ENCODE measurements at regions of chr12 and their contacts with region 1.

Region 1: DNA sequence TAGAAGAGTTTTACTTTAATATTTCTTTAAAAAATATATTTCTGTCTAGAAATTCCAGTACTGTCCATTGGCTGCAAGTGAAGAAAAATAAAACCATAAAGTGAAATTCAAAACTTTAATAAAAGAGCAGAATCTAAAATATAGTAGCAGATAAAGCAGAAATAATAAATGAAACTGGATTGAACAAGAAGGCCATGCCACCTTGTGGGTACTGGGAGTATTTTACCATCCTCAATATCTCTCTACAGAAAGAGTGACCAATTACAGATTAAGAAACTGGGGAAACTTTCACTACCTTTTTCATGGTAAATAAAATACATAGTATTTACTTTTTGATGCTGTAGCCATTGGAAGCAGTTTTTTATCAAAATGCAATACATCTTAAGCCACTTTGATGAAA is 220.5 kb downstream of the BCAT1 start:
- DNase-seq: no peak
- ATAC-seq: no peak
- H3K4me3 Mint-ChIP-seq: no peak overlapping the region
- H3K27ac Mint-ChIP-seq: peak overlapping the region; percentile 37
- H3K4me1 Mint-ChIP-seq: peaks cover 53% of the 10 kb centered on the region
- H3K27me3 Mint-ChIP-seq: no peaks in the 10 kb centered on the region

Region 2: GRCh38 chr12:24425601-24425970 is 302.8 kb before region 1 on chr12:
- CTCF ChIA-PET with region 1: no interaction called
- POLR2A ChIA-PET with region 1: no interaction called
- intact Hi-C with region 1: loop called (anchors 5 to 10 kb)
- DNase-seq: peak; percentile 34
- ATAC-seq: peak; percentile 88
- H3K4me3 Mint-ChIP-seq: no peak overlapping the region
- H3K27ac Mint-ChIP-seq: peak overlapping the region; percentile 80
- H3K4me1 Mint-ChIP-seq: peaks cover 19% of the 10 kb centered on the region
- H3K27me3 Mint-ChIP-seq: peaks cover 5% of the 10 kb centered on the region

Region 3: DNA sequence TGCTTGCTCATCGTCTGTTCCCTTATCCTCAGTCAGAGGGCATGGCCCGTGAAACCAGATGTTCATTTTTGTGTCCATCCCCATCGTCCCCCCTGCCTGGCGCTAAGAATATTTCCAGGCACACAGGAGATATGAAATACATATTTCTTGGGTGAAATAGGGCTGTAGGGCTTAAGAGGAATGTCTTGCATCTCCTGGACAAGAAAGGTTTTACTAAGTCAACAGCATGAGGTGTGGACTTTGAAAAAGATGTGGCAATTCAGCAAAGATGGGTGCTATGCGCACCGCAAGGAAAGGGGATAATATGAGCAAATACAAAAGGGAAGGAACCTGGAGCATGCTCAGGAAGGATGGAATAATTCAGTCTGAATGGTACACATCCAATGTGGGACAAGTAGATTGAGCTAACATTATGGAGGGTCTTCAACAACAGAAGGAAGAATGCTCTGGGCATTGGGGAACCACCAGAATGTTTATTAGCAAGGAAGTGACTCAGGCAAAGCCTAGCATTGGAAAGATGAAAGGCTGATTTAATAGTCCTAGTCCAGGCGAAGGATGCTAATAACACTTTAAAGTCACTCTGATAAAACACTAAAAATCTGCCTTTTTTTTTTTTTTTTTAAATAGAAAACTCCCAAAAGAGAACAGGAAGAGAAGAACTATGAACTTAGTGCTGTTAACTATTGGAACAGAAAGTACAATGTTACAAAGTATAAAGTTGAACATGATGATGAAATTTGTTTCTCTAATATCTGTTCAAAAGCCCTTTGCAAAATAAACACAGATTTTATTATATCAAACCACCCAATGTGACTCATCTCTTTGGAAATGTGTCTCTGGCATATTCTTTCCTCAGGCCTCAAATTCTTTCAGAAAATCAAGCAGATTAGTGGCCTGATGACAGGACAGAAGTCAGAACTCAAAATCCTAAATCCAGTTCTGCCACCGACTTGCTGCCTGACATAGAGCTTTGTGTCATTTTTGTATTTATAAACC is 228.9 kb before region 1 on chr12:
- CTCF ChIA-PET with region 1: no interaction called
- POLR2A ChIA-PET with region 1: no interaction called
- intact Hi-C with region 1: no loop called
- DNase-seq: no peak
- ATAC-seq: no peak
- H3K4me3 Mint-ChIP-seq: no peak overlapping the region
- H3K27ac Mint-ChIP-seq: no peak overlapping the region
- H3K4me1 Mint-ChIP-seq: no peaks in the 10 kb centered on the region
- H3K27me3 Mint-ChIP-seq: no peaks in the 10 kb centered on the region

Region 4: DNA sequence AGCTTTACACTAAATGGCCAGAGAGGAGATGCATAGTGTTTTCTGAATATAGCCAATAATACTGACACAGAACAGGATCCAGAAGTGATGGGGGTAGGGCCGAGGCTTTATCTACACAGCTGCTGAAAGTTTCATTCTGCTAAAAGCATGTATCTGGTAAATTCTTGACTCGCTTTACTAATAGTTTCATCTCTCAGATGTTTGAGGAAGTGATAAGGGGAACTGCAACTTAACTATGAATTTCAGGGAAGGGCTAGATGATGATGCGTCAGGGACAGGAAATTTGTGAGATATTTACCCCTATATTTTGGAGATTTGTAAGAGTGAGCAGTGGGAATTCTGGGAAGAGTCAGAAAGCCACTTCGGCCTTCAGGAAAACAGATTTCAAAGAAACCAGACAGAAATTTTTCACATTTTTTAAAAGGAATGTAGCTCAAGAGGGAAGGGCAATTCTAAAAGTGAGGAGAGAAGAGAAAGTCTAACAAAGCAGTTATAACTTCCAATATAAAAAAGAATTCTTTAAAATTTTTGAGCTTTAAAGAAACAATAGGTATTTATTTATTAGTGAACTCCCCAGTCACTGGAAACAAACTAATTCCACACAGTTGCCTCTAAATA is 22.5 kb before region 1 on chr12:
- CTCF ChIA-PET with region 1: interaction called, 5 read pairs
- POLR2A ChIA-PET with region 1: interaction called, 5 read pairs
- intact Hi-C with region 1: loop called (anchors 1 to 2 kb)
- DNase-seq: peak; percentile 22
- ATAC-seq: peak; percentile 21
- H3K4me3 Mint-ChIP-seq: peak overlapping the region; percentile 42
- H3K27ac Mint-ChIP-seq: peak overlapping the region; percentile 86
- H3K4me1 Mint-ChIP-seq: peaks cover 16% of the 10 kb centered on the region
- H3K27me3 Mint-ChIP-seq: peaks cover 12% of the 10 kb centered on the region

Region 5: DNA sequence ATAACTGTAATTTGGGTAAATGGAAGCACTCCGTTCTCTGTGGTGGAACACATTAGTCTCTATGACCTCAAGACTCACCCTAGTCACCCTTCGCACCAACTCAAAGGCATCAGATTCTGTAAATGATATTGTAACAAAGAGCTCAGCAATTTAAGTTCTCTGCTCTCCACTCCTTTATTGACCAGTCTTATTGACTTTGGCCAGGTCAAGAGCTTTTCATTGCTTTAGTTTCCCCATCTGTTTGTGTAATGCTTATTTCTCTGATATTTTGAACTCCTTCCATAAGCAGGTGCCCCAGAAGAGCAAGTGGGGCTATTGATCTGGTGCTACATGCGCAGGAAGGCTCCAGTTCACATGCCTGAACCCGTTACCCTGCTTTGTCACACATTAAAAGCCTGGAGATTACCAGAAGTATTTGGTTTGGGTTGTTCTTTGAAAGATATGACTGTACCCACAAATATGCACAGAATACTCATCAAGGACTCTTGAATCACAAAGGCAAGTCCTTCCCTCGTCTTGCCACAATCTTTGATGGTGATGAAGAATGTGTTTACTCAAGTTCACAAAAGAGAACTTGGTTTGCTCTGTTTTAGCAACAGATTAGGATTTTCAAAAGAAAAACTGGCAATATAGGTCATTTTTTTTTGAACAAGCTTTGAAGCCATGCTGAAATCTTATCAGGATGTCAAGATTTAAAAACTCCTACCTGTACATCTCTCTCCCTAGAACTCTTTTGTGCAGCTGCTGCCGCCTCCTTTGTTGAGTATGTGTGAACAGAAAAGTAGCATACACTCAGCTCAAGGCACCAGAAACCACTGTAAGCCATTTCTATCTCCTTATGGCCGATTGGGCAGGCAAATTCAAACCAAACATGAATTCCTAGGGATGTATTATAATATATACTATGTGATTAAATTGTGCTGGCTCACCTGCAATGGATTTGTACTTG is 26.6 kb after region 1 on chr12:
- CTCF ChIA-PET with region 1: no interaction called
- POLR2A ChIA-PET with region 1: no interaction called
- intact Hi-C with region 1: loop called (anchors 1 kb)
- DNase-seq: peak; percentile 47
- ATAC-seq: peak; percentile 92
- H3K4me3 Mint-ChIP-seq: no peak overlapping the region
- H3K27ac Mint-ChIP-seq: peak overlapping the region; percentile 84
- H3K4me1 Mint-ChIP-seq: peaks cover 31% of the 10 kb centered on the region
- H3K27me3 Mint-ChIP-seq: peaks cover 16% of the 10 kb centered on the region

Region 6: GRCh38 chr12:24902511-24903328 is 174.4 kb after region 1 on chr12:
- CTCF ChIA-PET with region 1: no interaction called
- POLR2A ChIA-PET with region 1: no interaction called
- intact Hi-C with region 1: loop called in 1 of 2 experiments (anchors 5 kb)
- DNase-seq: peak; percentile 63
- ATAC-seq: peak; percentile 28
- H3K4me3 Mint-ChIP-seq: peak overlapping the region; percentile 88
- H3K27ac Mint-ChIP-seq: peak overlapping the region; percentile 95
- H3K4me1 Mint-ChIP-seq: peaks cover 50% of the 10 kb centered on the region
- H3K27me3 Mint-ChIP-seq: peaks cover 28% of the 10 kb centered on the region

Measured in activated CD4-positive, alpha-beta T cell treated with anti-CD3 and anti-CD28 coated beads for 36 hours (primary cell).